WTC11 (cell line): ENCODE measurements at regions of chr6 and their contacts with region 1.

Region 1: DNA sequence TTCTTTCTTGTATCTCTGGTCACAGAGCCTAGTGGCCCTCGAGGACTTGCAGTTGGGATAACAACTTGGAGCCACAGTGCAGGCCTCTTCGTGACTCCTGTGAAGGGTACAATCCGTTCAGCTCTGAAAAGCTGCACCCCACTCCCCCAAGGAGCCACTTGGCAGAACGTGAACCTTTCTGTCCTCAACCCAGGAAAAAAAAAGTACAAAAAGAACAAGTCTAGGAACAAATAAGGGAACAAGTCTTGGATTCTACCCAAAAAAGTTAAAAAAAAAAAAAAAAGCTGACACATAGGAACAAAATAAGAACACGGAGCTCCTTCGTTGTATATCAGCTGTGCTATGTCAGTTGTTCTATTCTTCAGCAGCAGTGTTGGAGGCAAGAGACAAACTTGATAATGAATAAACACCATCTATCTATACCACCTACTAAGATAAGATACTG is 77.9 kb upstream of the TULP1 start:
- DNase-seq: no peak
- ATAC-seq: no peak
- H3K4me3 Mint-ChIP-seq: no peak overlapping the region
- H3K27ac Mint-ChIP-seq: peak overlapping the region; percentile 58; the same call in 1 of the 2 replicates
- H3K4me1 Mint-ChIP-seq: peaks cover 5% of the 10 kb centered on the region; the same call in 1 of the 2 replicates
- H3K27me3 Mint-ChIP-seq: no peaks in the 10 kb centered on the region
- CTCF ChIP-seq: no peak

Region 2: GRCh38 chr6:35240840-35241801 is 349.5 kb before region 1 on chr6:
- CTCF ChIA-PET with region 1: no interaction called
- POLR2A ChIA-PET with region 1: no interaction called
- DNase-seq: peak; percentile 95
- ATAC-seq: peak; percentile 70
- H3K4me3 Mint-ChIP-seq: no peak overlapping the region
- H3K27ac Mint-ChIP-seq: no peak overlapping the region
- H3K4me1 Mint-ChIP-seq: peaks cover 52% of the 10 kb centered on the region
- H3K27me3 Mint-ChIP-seq: peaks cover 48% of the 10 kb centered on the region
- CTCF ChIP-seq: peak; percentile 98

Region 3: GRCh38 chr6:35485402-35485877 is 105.2 kb before region 1 on chr6:
- CTCF ChIA-PET with region 1: no interaction called
- POLR2A ChIA-PET with region 1: no interaction called
- DNase-seq: peak; percentile 67
- ATAC-seq: peak; percentile 64
- H3K4me3 Mint-ChIP-seq: peak overlapping the region; percentile 65
- H3K27ac Mint-ChIP-seq: peak overlapping the region; percentile 98
- H3K4me1 Mint-ChIP-seq: peaks cover 44% of the 10 kb centered on the region
- H3K27me3 Mint-ChIP-seq: no peaks in the 10 kb centered on the region
- CTCF ChIP-seq: no peak

Region 4: GRCh38 chr6:35569011-35569461 is 21.6 kb before region 1 on chr6:
- CTCF ChIA-PET with region 1: interaction called, 11 read pairs
- POLR2A ChIA-PET with region 1: interaction called, 3 read pairs
- DNase-seq: peak; percentile 66
- ATAC-seq: peak; percentile 95
- H3K4me3 Mint-ChIP-seq: no peak overlapping the region
- H3K27ac Mint-ChIP-seq: no peak overlapping the region
- H3K4me1 Mint-ChIP-seq: peaks cover 15% of the 10 kb centered on the region
- H3K27me3 Mint-ChIP-seq: no peaks in the 10 kb centered on the region
- CTCF ChIP-seq: peak; percentile 45

Region 5: GRCh38 chr6:35611240-35611639 is 20.6 kb after region 1 on chr6:
- CTCF ChIA-PET with region 1: no interaction called
- POLR2A ChIA-PET with region 1: no interaction called
- DNase-seq: no peak
- ATAC-seq: no peak
- H3K4me3 Mint-ChIP-seq: no peak overlapping the region
- H3K27ac Mint-ChIP-seq: no peak overlapping the region
- H3K4me1 Mint-ChIP-seq: peaks cover 7% of the 10 kb centered on the region
- H3K27me3 Mint-ChIP-seq: no peaks in the 10 kb centered on the region
- CTCF ChIP-seq: no peak

Region 6: GRCh38 chr6:35893246-35893645 is 302.6 kb after region 1 on chr6:
- CTCF ChIA-PET with region 1: no interaction called
- POLR2A ChIA-PET with region 1: no interaction called
- DNase-seq: no peak
- ATAC-seq: no peak
- H3K4me3 Mint-ChIP-seq: no peak overlapping the region
- H3K27ac Mint-ChIP-seq: peak overlapping the region; percentile 58
- H3K4me1 Mint-ChIP-seq: peaks cover 26% of the 10 kb centered on the region
- H3K27me3 Mint-ChIP-seq: no peaks in the 10 kb centered on the region
- CTCF ChIP-seq: no peak